ENCODE measurements at regions of chr21 and their contacts with region 1.

Region 1: GRCh38 chr21:25298512-25299491 is 308.5 kb downstream of the MRPL39 start:
- DNase-seq: no peak
- ATAC-seq: peak; percentile 58
- H3K4me3 Mint-ChIP-seq: peak overlapping the region; percentile 36
- H3K27ac Mint-ChIP-seq: peak overlapping the region; percentile 36
- H3K4me1 Mint-ChIP-seq: peaks cover 60% of the 10 kb centered on the region
- H3K27me3 Mint-ChIP-seq: no peaks in the 10 kb centered on the region
- CTCF ChIP-seq: no peak

Region 2: GRCh38 chr21:25199944-25200343 is 98.9 kb before region 1 on chr21:
- CTCF ChIA-PET with region 1: no interaction called
- POLR2A ChIA-PET with region 1: no interaction called
- intact Hi-C with region 1: no loop called
- DNase-seq: no peak
- ATAC-seq: no peak
- H3K4me3 Mint-ChIP-seq: no peak overlapping the region
- H3K27ac Mint-ChIP-seq: no peak overlapping the region
- H3K4me1 Mint-ChIP-seq: peaks cover 12% of the 10 kb centered on the region
- H3K27me3 Mint-ChIP-seq: no peaks in the 10 kb centered on the region
- CTCF ChIP-seq: no peak

Region 3: GRCh38 chr21:25220954-25221353 is 77.8 kb before region 1 on chr21:
- CTCF ChIA-PET with region 1: no interaction called
- POLR2A ChIA-PET with region 1: no interaction called
- intact Hi-C with region 1: no loop called
- DNase-seq: no peak
- ATAC-seq: no peak
- H3K4me3 Mint-ChIP-seq: peak overlapping the region; percentile 25
- H3K27ac Mint-ChIP-seq: no peak overlapping the region
- H3K4me1 Mint-ChIP-seq: peaks cover 13% of the 10 kb centered on the region
- H3K27me3 Mint-ChIP-seq: no peaks in the 10 kb centered on the region
- CTCF ChIP-seq: no peak

Region 4: DNA sequence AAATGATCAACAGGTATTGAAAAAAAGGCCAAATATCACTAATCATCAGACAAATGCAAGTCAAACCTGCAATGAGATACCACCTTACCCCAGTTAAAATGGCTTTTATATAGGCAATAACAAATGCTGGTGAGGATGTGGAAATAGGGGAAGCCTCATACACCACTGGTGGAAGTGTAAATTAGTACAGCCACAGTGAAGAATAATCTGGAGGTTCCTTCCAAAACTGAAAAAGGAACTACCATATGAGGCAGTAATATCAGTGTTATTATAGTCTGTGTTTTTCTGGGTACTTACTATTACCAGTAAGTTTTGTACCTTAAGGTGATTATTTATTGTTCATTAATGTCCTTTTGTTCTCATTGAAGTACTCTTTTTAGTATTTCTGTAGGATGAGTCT is 107.2 kb after region 1 on chr21:
- CTCF ChIA-PET with region 1: no interaction called
- POLR2A ChIA-PET with region 1: no interaction called
- intact Hi-C with region 1: no loop called
- DNase-seq: no peak
- ATAC-seq: no peak
- H3K4me3 Mint-ChIP-seq: no peak overlapping the region
- H3K27ac Mint-ChIP-seq: no peak overlapping the region
- H3K4me1 Mint-ChIP-seq: peaks cover 49% of the 10 kb centered on the region
- H3K27me3 Mint-ChIP-seq: no peaks in the 10 kb centered on the region
- CTCF ChIP-seq: no peak

Region 5: DNA sequence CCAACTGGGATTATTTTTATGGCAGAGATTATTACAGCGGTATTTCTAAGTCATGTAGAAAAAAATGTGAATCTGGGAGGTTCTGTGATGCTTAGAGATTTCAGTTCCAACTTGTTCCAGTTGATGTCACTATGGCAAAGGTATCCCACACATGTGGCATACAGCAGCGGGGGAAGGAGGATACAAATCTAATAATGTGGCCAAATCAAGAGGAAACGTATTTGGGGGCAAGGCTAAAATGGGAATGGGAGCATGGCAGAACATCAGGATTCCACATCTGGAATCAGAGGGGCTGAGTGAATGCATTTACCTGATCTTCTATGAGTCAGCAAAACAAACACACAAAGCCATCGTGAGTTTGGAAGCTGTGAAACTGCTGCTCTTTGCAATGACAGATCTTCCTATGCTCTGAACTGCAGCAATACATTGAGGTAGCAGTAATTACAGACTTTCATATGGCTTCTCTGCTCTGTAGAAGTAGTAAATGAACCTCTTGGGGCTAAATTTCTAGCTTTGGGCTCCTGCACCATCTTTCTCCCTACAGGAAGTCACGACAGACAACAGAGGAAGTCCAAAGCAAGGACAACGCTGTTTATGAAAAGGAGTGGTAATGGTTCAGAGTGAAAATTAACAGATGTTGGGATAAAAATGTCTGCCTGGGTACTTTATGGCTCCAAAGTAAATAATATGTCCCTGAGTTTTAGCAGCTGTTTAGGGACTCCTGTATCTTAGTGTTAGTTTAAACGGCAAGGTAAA is 491.5 kb after region 1 on chr21:
- CTCF ChIA-PET with region 1: no interaction called
- POLR2A ChIA-PET with region 1: no interaction called
- intact Hi-C with region 1: no loop called
- DNase-seq: no peak
- ATAC-seq: no peak
- H3K4me3 Mint-ChIP-seq: peak overlapping the region; percentile 73
- H3K27ac Mint-ChIP-seq: no peak overlapping the region
- H3K4me1 Mint-ChIP-seq: peaks cover 10% of the 10 kb centered on the region
- H3K27me3 Mint-ChIP-seq: peaks cover 21% of the 10 kb centered on the region
- CTCF ChIP-seq: no peak

Region 6: DNA sequence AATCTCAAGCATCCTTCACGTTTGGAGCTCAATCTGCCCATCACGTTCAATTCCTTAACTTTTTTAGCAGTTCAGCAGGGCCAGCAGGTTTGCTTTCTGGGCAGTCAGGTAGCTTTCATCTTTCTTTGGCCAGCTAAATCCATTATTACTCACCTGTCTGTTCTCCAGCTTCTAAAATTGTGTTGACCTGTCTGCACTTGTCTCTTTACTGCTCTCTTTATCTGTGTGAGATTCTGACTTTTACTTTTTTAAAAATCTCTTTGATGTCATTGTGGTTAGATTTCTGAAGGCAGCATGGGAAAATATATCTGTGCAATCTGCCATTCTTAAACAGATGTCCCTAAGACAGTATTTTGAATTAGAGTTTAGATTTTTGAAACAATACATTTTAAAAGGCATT is 1299.2 kb after region 1 on chr21:
- CTCF ChIA-PET with region 1: no interaction called
- POLR2A ChIA-PET with region 1: no interaction called
- intact Hi-C with region 1: loop called (anchors 5 kb)
- DNase-seq: no peak
- ATAC-seq: no peak
- H3K4me3 Mint-ChIP-seq: no peak overlapping the region
- H3K27ac Mint-ChIP-seq: no peak overlapping the region
- H3K4me1 Mint-ChIP-seq: no peaks in the 10 kb centered on the region
- H3K27me3 Mint-ChIP-seq: no peaks in the 10 kb centered on the region
- CTCF ChIP-seq: no peak

Measured in activated B cell treated with CpG ODN at 0.5 μM for 24 hours (primary cell).